ENCODE measurements at regions of chr17 and their contacts with region 1.

Region 1: DNA sequence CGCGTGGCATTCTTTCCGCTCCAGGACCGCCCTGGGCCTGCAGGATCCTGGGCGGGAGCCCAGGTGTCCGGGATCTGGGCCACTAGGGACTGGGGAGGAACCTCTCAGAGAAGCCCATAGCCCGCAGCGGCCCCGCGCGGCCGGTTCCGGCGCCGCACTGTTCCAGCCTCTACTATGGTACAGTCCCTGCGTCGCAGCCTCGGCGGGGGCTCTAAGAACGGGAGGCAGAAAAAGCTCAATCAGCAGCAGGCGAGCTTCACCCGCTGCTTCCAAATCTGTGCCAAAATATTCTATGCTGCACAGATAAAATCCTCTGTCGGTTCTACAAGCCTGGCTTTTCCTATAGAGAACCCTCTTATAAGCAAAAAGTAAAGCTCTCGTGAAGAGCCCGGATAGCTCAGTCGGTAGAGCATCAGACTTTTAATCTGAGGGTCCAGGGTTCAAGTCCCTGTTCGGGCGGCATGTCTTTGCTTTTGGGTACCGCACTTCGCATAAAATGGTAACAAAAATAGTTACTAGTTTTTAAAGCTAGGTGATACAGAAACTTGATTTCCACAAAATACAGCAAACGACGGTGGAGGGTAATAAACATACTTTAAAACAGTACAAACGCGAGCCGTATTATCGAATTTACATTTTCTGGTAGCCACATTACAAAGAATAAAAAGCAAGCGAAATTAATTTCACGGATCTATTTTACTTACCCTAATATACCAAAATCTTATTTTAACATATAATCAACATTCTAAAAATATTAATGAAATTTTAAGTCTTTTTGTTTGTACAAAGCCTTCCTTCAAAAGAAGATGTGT is 661 bp upstream of the ALOXE3 start:
- DNase-seq: peak; percentile 80
- ATAC-seq: peak; percentile 59
- H3K4me3 ChIP-seq: peak overlapping the region; percentile 60
- H3K27ac ChIP-seq: no peak overlapping the region; the same call in 1 of the 2 replicates
- H3K4me1 ChIP-seq: peaks cover 8% of the 10 kb centered on the region; the same call in 1 of the 2 replicates
- H3K27me3 ChIP-seq: peaks cover 26% of the 10 kb centered on the region
- CTCF ChIP-seq: peak; percentile 90
- POLR2A ChIP-seq: no peak
- RAD21 ChIP-seq: peak; percentile 65

Region 2: GRCh38 chr17:7632492-7632894 is 486.5 kb before region 1 on chr17:
- CTCF ChIA-PET with region 1: no interaction called
- POLR2A ChIA-PET with region 1: no interaction called
- dilution Hi-C with region 1: no loop called
- in situ Hi-C with region 1: no loop called
- intact Hi-C with region 1: no loop called
- DNase-seq: peak; percentile 54
- ATAC-seq: peak; percentile 35
- H3K4me3 ChIP-seq: no peak overlapping the region
- H3K27ac ChIP-seq: no peak overlapping the region
- H3K4me1 ChIP-seq: 0 out of 2 replicates have a peak, but pooled peaks cover 1% of the 10 kb centered on the region
- H3K27me3 ChIP-seq: peaks cover 4% of the 10 kb centered on the region; the same call in 1 of the 2 replicates
- CTCF ChIP-seq: peak; percentile 64
- POLR2A ChIP-seq: no peak
- RAD21 ChIP-seq: peak; percentile 56

Region 3: GRCh38 chr17:8073627-8074484 is 45.1 kb before region 1 on chr17:
- CTCF ChIA-PET with region 1: interaction called, 9 read pairs
- POLR2A ChIA-PET with region 1: no interaction called
- dilution Hi-C with region 1: no loop called
- in situ Hi-C with region 1: loop called (anchors 5 kb)
- intact Hi-C with region 1: no loop called
- DNase-seq: peak; percentile 49
- ATAC-seq: peak; percentile 91
- H3K4me3 ChIP-seq: no peak overlapping the region
- H3K27ac ChIP-seq: no peak overlapping the region
- H3K4me1 ChIP-seq: no peaks in the 10 kb centered on the region
- H3K27me3 ChIP-seq: peaks cover 82% of the 10 kb centered on the region
- CTCF ChIP-seq: peak; percentile 80
- POLR2A ChIP-seq: no peak
- RAD21 ChIP-seq: peak; percentile 37

Region 4: GRCh38 chr17:8091033-8091687 is 27.8 kb before region 1 on chr17:
- CTCF ChIA-PET with region 1: interaction called, 4 read pairs
- POLR2A ChIA-PET with region 1: no interaction called
- dilution Hi-C with region 1: no loop called
- in situ Hi-C with region 1: no loop called
- intact Hi-C with region 1: loop called (anchors 1 kb)
- DNase-seq: no peak
- ATAC-seq: no peak
- H3K4me3 ChIP-seq: no peak overlapping the region
- H3K27ac ChIP-seq: no peak overlapping the region
- H3K4me1 ChIP-seq: no peaks in the 10 kb centered on the region
- H3K27me3 ChIP-seq: peaks cover 78% of the 10 kb centered on the region
- CTCF ChIP-seq: no peak
- POLR2A ChIP-seq: no peak
- RAD21 ChIP-seq: no peak

Region 5: DNA sequence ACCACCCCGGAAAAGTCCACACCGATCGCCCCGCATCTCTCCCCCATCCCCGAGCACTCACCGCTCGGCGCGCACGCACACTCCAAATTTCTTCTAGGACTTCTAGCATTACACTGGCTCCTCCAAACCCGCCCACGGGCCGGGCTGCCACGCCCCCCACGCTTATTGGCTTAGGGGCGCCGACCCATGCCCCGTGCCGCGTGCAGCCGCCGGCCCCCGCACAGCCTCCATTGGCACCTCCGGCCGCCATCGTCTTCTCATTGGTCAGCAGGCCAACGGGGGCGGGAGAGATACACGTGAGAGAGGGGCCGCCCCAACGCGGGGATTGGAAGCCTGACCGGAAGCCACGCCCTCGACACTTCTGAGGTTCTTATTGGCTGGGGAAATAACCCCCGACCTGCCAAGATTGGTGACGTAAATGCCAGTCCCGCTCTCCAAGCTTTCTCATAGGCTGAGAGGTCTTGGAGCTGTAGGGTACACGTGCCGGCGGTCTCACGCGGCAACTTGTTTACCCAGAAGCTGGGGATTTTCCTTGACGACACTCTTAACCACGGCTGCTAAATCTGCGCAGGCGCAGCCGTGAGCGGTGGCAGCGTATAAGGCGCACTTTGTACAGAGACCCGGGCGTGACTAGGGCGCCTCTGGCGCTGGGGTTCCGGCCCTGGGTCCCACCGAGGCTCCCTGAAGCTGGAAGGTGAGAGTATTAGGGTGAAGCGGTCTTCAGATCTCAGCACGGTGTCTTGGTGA is 37.4 kb after region 1 on chr17:
- CTCF ChIA-PET with region 1: interaction called, 3 read pairs
- POLR2A ChIA-PET with region 1: no interaction called
- dilution Hi-C with region 1: no loop called
- in situ Hi-C with region 1: no loop called
- intact Hi-C with region 1: loop called (anchors 1 kb)
- DNase-seq: peak; percentile 100
- ATAC-seq: peak; percentile 69
- H3K4me3 ChIP-seq: peak overlapping the region; percentile 69
- H3K27ac ChIP-seq: peak overlapping the region; percentile 63
- H3K4me1 ChIP-seq: peaks cover 22% of the 10 kb centered on the region
- H3K27me3 ChIP-seq: no peaks in the 10 kb centered on the region
- CTCF ChIP-seq: 0 out of 2 replicates have a peak, but pooled peaks have one; percentile 26
- POLR2A ChIP-seq: peak; percentile 98
- RAD21 ChIP-seq: peak; percentile 44

Region 6: GRCh38 chr17:8222630-8223356 is 103.8 kb after region 1 on chr17:
- CTCF ChIA-PET with region 1: interaction called, 4 read pairs
- POLR2A ChIA-PET with region 1: no interaction called
- dilution Hi-C with region 1: loop called (anchors 25 kb)
- in situ Hi-C with region 1: loop called (anchors 5 kb)
- intact Hi-C with region 1: loop called (anchors 1 kb)
- DNase-seq: peak; percentile 93
- ATAC-seq: peak; percentile 40
- H3K4me3 ChIP-seq: peak overlapping the region; percentile 62
- H3K27ac ChIP-seq: peak overlapping the region; percentile 85
- H3K4me1 ChIP-seq: peaks cover 9% of the 10 kb centered on the region
- H3K27me3 ChIP-seq: no peaks in the 10 kb centered on the region
- CTCF ChIP-seq: no peak
- POLR2A ChIP-seq: peak; percentile 77; the same call in 1 of the 2 replicates
- RAD21 ChIP-seq: no peak

Region 7: GRCh38 chr17:8455665-8456209 is 336.8 kb after region 1 on chr17:
- CTCF ChIA-PET with region 1: no interaction called
- POLR2A ChIA-PET with region 1: no interaction called
- dilution Hi-C with region 1: no loop called
- in situ Hi-C with region 1: no loop called
- intact Hi-C with region 1: no loop called
- DNase-seq: no peak
- ATAC-seq: no peak
- H3K4me3 ChIP-seq: no peak overlapping the region
- H3K27ac ChIP-seq: no peak overlapping the region
- H3K4me1 ChIP-seq: no peaks in the 10 kb centered on the region
- H3K27me3 ChIP-seq: no peaks in the 10 kb centered on the region
- CTCF ChIP-seq: no peak
- POLR2A ChIP-seq: no peak
- RAD21 ChIP-seq: no peak